ENCODE measurements at regions of chr14 and their contacts with region 1.

Region 1: DNA sequence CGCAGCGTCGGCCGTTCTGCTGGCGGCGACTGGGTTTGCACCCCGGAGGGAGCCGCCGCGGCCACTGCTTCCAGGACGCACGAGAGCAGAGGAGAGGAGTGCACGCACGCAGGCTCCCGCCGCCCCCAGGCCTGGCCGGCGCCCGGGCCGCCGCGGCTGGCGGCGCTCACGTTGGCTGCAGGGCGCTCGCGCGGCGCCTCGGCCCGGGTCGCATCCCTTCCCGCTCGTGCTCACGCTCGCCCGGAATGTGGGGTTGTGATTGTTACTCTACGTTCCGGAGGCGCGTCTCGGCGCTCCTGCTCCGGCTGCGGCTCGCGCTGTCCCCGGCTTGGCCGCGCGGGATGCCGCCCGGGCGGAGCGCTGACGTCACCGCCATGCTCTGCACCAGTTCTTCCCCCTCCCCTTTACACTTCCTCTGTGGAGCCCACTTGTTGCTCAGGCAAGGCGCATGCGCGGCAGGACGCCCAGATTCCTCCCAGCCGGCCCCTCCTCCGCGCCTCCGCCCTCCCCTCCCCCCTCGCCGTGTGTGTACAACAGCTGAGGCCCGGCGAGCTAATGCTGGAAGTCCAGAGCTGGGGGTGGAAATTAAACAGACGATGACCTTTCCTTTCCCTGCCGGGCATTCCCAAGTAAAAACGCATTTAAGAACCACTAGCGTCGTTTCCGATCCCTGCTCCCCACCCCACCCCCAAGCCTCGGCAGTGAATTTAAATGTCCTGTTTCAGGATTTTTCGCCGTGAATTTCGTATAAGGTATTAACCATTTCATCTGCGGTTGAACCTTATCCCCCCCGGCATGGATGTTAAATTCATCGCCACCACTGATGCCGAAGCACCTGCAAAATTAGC is at the start of gene IRF2BPL:
- DNase-seq: peak; percentile 95 to 99 (median 98)

Region 2: DNA sequence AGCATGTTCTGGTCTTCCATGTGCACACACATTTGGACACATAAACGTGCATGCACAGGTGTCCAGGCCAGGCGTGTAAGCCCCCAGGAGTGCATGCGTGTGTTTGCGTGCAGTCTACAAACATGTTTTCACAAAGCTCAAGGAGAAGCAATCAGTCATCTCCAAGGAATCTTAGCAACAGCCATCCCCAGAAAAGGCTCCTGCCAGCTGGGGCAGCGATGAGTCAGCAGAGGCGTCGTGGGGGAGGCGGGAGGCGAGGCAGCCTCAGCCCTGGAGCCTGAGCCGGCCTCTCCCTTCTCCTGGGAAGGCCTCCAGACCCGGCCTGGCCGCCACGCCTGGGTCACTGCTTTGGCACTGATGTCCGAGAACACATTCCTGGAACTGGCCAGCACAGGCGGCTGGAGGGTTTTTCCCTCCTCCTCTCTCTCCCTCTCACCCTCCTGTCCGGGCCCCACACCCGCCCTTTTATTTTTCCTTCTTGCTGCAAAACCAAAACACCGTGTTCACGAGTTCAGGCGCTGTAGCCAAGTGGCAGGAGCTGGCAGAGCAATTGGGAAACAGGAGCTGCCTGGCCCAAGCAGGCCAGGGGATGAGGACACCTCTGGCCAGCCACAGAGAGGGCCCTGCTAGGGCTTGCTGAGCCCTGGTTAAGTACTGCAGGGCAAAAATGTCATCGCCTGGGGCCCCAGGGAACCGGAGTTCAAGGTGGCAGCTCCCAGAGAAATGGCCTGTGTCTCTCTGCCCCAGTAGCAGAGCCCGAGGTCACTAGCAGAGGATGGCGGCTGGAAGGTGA is 109.7 kb before region 1 on chr14:
- intact Hi-C with region 1: loop called (anchors 2 kb)
- DNase-seq: peak; percentile 66 to 97 (median 88)

Region 3: GRCh38 chr14:76956316-76957090 is 72.1 kb before region 1 on chr14:
- intact Hi-C with region 1: loop called (anchors 2 kb)
- DNase-seq: peak; percentile 89 to 98 (median 94)

Region 4: DNA sequence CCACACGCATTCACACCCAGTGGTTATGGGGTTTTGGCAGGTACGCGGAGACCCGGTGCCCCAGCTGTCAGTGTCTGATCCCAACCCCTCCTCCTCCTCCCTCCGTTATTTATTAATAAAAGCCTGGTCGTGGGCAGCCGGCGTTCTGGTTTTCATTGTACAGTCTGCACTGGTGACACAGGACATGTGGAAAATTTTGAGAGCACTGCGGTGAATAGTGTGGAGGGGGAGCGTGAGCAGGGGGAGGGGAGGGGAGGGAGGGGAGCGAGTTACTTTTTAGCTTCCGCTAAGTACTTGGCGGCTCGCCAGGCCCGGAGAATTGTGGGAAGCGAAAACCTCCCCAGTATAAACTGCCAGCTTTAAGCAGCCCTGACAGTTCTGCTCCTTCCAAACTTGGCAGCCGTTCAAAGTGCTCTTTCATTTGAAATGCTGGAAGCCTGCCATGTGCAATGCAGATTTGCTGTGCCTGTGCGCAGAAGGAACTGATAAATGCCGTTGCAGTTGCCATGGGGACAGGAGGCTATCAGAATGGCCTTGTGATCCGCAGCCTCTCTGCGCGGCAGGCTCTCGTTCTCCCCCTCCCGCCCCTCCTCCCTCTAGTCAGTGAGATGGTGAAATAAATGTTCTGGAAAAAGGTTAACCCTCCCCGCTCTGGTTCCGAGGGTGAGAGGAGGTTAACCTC is 11.6 kb after region 1 on chr14:
- intact Hi-C with region 1: loop called (anchors 1 kb)
- DNase-seq: peak; percentile 94 to 99 (median 98)

Measured in head of caudate nucleus (tissue), 42 donors.